Spleen (tissue), 13 donors: ENCODE measurements at regions of chr11 and their contacts with region 1.

Region 1: DNA sequence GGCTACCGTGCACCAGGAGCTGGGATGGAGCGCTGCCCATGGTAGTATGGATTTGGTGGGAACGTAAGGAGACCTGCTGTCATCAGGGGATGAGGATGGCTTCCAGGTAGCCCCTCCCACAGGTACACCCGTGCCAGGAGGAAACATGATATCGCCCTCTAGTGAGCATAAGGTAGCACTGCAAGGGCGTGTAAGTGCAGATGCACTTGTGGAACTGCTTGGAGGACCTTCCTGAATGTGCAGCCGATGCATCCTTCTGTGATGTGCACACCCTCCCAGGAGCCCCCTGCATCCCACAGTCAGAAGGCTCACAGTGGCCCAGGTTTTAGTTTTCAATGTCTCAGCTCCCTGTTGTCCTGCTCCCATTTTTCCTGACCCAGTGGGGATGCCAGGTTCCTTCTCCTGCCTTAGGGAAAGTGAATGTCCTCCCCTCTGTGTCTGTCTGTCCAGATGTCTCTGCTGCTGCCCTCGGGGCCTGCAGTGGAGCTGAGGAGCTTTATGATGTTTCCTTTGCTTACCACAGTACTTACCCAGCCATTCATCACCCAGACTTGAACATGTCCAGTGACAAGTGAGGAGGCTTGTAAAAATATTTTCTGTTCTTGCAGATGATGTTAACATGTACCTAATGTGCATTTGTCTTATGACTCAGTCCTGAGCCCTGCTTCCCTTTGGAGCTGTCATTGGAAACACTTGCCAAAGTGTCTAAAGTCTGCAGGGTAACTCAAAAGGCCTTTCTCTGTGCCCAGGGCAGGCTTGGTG is 49.2 kb downstream of the DBX1 start:
- DNase-seq: no peak
- H3K4me3 ChIP-seq: no peak overlapping the region
- H3K27ac ChIP-seq: no peak overlapping the region
- H3K4me1 ChIP-seq: peaks cover 0 to 15% (median 2%) of the 10 kb centered on the region in 6 donors
- H3K27me3 ChIP-seq: no peaks in the 10 kb centered on the region
- CTCF ChIP-seq: peak; percentile 19 to 84 (median 70)
- POLR2A ChIP-seq: no peak

Region 2: DNA sequence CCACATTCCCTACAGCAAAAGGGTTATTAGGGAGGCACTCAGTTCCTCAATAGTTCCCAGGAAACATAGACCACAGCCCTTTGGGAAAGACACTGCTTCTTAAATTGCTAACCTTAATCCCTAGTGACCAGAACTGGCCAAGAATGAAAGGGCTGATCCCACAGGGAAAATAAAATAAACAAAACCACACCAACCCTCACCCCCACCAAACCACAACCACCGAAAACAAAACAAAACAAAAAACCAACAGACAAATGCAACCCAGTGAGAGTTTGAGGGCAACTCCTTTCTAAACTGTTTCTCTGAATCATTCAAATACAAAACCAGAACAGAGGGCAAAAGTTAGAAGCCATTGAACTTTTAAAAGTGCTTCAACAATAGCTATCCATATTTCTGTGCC is 341.3 kb before region 1 on chr11:
- intact Hi-C with region 1: no loop called
- DNase-seq: no peak
- H3K4me3 ChIP-seq: no peak overlapping the region
- H3K27ac ChIP-seq: no peak overlapping the region
- H3K4me1 ChIP-seq: no peaks in the 10 kb centered on the region
- H3K27me3 ChIP-seq: peaks cover 0 to 9% (median 0%) of the 10 kb centered on the region in 7 donors
- CTCF ChIP-seq: no peak
- POLR2A ChIP-seq: no peak

Region 3: DNA sequence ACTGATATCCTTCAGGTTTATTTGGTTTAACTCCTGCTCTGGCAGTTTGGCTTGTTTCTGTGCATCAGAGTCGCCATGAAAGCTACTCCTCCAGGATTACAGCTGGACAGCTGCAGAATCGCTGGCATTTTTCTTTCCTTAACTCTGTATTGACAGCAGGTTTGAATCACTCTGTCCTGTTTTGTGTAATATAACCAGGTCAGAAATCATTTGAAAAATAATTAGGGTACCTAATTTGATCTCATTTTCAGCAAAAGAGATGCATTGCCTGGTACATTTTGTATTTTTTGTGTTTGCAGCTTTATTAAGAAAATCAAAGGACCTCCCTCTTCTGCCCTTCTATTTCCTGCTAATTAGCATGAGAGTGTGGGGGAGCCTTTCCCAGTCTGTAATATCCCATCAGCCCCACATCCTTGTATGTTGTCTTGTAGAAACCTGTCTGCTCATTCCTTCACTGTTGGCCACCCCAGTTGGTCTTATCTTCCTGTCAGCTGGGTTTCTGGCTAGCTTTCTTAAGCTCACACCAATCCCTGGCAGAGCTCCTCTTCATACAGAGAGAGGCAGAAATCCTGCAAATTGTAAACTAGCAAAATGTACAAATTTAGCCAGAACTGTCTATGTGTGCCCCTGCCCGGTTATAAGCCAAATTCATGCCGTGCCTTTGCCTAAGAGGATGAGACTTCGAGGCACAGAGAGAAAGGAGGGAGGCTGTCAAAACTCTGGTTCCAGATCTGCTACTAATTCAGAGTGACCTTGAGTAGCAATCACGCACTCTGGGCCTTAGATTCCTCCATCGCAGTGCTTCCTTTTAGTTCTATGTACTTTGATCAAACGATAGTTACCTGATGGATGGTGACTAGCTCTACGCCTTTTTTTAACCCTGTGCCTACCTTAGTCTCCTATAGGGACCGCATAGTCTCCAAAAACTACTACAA is 197.9 kb before region 1 on chr11:
- intact Hi-C with region 1: no loop called
- DNase-seq: no peak
- H3K4me3 ChIP-seq: no peak overlapping the region
- H3K27ac ChIP-seq: no peak overlapping the region
- H3K4me1 ChIP-seq: no peaks in the 10 kb centered on the region
- H3K27me3 ChIP-seq: no peaks in the 10 kb centered on the region
- CTCF ChIP-seq: no peak
- POLR2A ChIP-seq: no peak

Region 4: DNA sequence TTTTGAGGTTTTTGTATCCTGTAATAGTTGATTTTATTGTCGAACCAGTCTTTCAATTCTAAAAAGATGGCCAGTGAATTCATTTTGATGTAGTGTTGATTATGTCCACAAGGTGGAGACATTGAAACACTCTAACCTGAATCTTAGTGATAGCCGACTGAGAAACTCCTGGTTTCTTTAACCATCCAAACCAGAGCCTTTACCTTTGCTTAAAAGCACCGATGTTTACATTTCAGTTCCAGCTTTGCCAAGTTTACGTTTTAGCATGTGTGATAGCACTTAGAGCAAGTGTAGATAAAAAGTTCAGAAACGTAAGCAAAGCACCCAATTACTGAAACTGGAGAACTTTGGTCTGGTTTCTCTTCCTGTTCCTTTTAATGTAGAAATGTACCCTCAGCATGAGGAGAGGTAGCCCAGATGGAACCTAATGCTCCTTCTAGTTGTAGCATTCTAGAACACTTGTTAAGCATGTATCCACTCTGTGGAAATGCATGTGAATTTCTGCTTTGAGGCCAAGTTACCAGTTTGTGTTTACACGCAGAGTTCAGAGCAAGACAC is 159.5 kb before region 1 on chr11:
- intact Hi-C with region 1: loop called (anchors 5 kb)
- DNase-seq: no peak
- H3K4me3 ChIP-seq: peak overlapping the region in 2 of 8 donors; percentile 28 to 43
- H3K27ac ChIP-seq: no peak overlapping the region
- H3K4me1 ChIP-seq: peaks cover 0 to 10% (median 4%) of the 10 kb centered on the region in 6 donors
- H3K27me3 ChIP-seq: no peaks in the 10 kb centered on the region
- CTCF ChIP-seq: peak; percentile 27 to 72 (median 65)
- POLR2A ChIP-seq: no peak

Region 5: GRCh38 chr11:20177136-20177535 is 66.0 kb after region 1 on chr11:
- intact Hi-C with region 1: no loop called
- DNase-seq: no peak
- H3K4me3 ChIP-seq: no peak overlapping the region
- H3K27ac ChIP-seq: no peak overlapping the region
- H3K4me1 ChIP-seq: no peaks in the 10 kb centered on the region
- H3K27me3 ChIP-seq: peaks cover 0 to 18% (median 0%) of the 10 kb centered on the region in 7 donors
- CTCF ChIP-seq: no peak
- POLR2A ChIP-seq: no peak

Region 6: GRCh38 chr11:20459865-20460264 is 348.8 kb after region 1 on chr11:
- intact Hi-C with region 1: no loop called
- DNase-seq: no peak
- H3K4me3 ChIP-seq: no peak overlapping the region
- H3K27ac ChIP-seq: no peak overlapping the region
- H3K4me1 ChIP-seq: no peaks in the 10 kb centered on the region
- H3K27me3 ChIP-seq: no peaks in the 10 kb centered on the region
- CTCF ChIP-seq: no peak
- POLR2A ChIP-seq: no peak